ENCODE measurements at regions of chr9 and their contacts with region 1.

Region 1: DNA sequence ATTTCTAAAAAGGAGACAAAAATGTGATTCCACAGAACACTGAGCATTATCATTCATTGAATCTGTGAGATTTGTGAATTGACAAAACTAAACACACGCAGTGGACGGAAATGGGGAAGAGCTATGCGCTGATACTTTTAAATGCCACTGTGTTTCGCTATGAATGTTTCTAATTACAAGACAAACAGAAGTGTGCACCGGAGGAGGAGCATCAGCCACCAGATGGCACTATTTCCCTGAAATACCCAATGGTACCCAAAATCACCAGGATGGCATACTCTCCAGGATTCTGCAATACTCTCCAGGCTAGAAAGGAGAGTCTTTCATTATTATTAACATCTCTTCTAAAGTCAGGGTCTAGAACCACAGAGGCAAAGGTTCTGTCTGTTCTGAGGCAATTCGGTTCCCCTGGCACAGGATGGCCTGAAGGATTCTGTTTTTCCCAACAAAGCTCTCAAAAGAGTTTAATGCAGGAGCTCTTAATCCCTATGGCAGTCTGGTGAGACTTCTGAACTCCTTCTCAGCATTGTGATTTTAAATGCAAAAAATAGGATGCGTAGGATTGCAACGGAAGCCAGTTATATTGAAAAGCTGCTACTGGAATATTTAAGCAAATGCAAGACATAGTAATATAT is 13.8 kb upstream of the PUM3 start:
- DNase-seq: peak; percentile 47 to 71 (median 65)
- H3K4me3 ChIP-seq: no peak overlapping the region
- H3K4me3 Mint-ChIP-seq: peak overlapping the region in 1 of 2 donors; percentile 22
- H3K27ac ChIP-seq: no peak overlapping the region
- H3K27ac Mint-ChIP-seq: no peak overlapping the region
- H3K4me1 ChIP-seq: peaks cover 0 to 5% of the 10 kb centered on the region in 2 donors
- H3K4me1 Mint-ChIP-seq: peaks cover 9% of the 10 kb centered on the region
- H3K27me3 ChIP-seq: peaks cover 0 to 7% of the 10 kb centered on the region in 2 donors
- H3K27me3 Mint-ChIP-seq: peaks cover 10 to 27% (median 12%) of the 10 kb centered on the region in 3 donors
- CTCF ChIP-seq: peak; percentile 85

Region 2: GRCh38 chr9:2839040-2839439 is 18.6 kb before region 1 on chr9:
- intact Hi-C with region 1: no loop called
- DNase-seq: no peak
- H3K4me3 ChIP-seq: no peak overlapping the region
- H3K4me3 Mint-ChIP-seq: no peak overlapping the region
- H3K27ac ChIP-seq: no peak overlapping the region
- H3K27ac Mint-ChIP-seq: no peak overlapping the region
- H3K4me1 ChIP-seq: peaks cover 8 to 15% of the 10 kb centered on the region in 2 donors
- H3K4me1 Mint-ChIP-seq: peaks cover 8% of the 10 kb centered on the region
- H3K27me3 ChIP-seq: no peaks in the 10 kb centered on the region
- H3K27me3 Mint-ChIP-seq: no peaks in the 10 kb centered on the region
- CTCF ChIP-seq: no peak

Region 3: DNA sequence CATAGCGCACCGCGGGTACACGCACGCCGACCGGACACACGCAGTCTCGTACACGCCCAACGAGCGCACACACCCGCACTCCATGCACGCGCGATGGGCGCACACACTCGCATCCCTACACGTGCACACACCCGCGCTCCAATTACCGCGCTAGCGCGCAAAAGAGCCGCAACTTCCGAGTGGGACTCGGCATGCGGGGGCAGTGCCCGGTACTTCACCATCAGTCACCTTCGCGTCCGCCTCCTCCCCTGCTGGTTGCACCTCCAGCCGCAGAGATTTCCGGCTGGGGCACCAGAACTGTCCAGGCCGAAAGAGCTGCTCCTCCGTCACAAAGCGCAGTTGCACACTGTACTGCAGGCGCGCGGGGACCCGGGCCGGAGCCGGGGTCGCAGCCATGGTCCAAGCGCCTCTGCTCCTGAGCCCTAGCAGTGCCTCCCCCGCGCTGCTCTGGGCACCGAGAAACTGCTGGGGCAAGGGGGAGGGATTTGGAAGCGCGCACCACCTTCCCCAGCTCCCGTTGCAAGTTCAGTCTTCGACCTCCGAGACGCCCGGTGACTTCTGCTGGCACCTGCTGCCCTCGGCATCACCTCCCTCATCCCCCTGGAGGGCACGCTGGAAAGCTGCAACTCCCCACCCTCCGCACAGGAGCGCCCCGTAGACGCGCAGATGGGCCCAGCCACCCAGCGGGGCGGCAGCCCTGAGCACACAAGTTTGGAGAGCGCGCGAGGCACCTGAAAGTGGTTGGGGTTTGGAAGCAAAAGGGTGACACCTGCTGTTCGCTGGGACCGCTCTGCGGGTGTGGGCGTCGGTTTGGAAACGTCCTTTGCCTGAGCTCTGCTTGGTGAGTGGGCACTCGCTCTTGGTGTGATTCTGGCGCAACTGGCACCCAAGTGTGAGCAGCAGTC is 323.6 kb after region 1 on chr9:
- intact Hi-C with region 1: loop called in 1 of 2 experiments (anchors 10 kb)
- DNase-seq: peak in 2 of 3 donors; percentile 3 to 26
- H3K4me3 ChIP-seq: peak overlapping the region in 2 of 3 experiments; percentile 3 to 37
- H3K4me3 Mint-ChIP-seq: peak overlapping the region; percentile 1 to 90
- H3K27ac ChIP-seq: no peak overlapping the region
- H3K27ac Mint-ChIP-seq: no peak overlapping the region
- H3K4me1 ChIP-seq: peaks cover 7% of the 10 kb centered on the region in 2 donors
- H3K4me1 Mint-ChIP-seq: peaks cover 11% of the 10 kb centered on the region
- H3K27me3 ChIP-seq: peaks cover 10 to 30% of the 10 kb centered on the region in 2 donors
- H3K27me3 Mint-ChIP-seq: peaks cover 24 to 28% (median 27%) of the 10 kb centered on the region in 3 donors
- CTCF ChIP-seq: no peak

Region 4: GRCh38 chr9:3441197-3441816 is 583.6 kb after region 1 on chr9:
- intact Hi-C with region 1: loop called in 1 of 2 experiments (anchors 5 kb)
- DNase-seq: peak; percentile 59 to 73 (median 67)
- H3K4me3 ChIP-seq: no peak overlapping the region
- H3K4me3 Mint-ChIP-seq: no peak overlapping the region
- H3K27ac ChIP-seq: no peak overlapping the region
- H3K27ac Mint-ChIP-seq: no peak overlapping the region
- H3K4me1 ChIP-seq: no peaks in the 10 kb centered on the region
- H3K4me1 Mint-ChIP-seq: peaks cover 8% of the 10 kb centered on the region
- H3K27me3 ChIP-seq: no peaks in the 10 kb centered on the region
- H3K27me3 Mint-ChIP-seq: peaks cover 0 to 5% (median 0%) of the 10 kb centered on the region in 3 donors
- CTCF ChIP-seq: peak; percentile 80

Region 5: GRCh38 chr9:4366591-4367330 is 1509.1 kb after region 1 on chr9:
- intact Hi-C with region 1: loop called in 1 of 2 experiments (anchors 5 kb)
- DNase-seq: peak in 2 of 3 donors; percentile 20 to 33
- H3K4me3 ChIP-seq: no peak overlapping the region
- H3K4me3 Mint-ChIP-seq: no peak overlapping the region
- H3K27ac ChIP-seq: no peak overlapping the region
- H3K27ac Mint-ChIP-seq: peak overlapping the region in 1 of 7 donors; percentile 7
- H3K4me1 ChIP-seq: no peaks in the 10 kb centered on the region
- H3K4me1 Mint-ChIP-seq: no peaks in the 10 kb centered on the region
- H3K27me3 ChIP-seq: no peaks in the 10 kb centered on the region
- H3K27me3 Mint-ChIP-seq: peaks cover 0 to 2% (median 2%) of the 10 kb centered on the region in 3 donors
- CTCF ChIP-seq: peak; percentile 82

Measured in CD14-positive monocyte (primary cell).